ENCODE measurements at regions of chr1 and their contacts with region 1.

Region 1: DNA sequence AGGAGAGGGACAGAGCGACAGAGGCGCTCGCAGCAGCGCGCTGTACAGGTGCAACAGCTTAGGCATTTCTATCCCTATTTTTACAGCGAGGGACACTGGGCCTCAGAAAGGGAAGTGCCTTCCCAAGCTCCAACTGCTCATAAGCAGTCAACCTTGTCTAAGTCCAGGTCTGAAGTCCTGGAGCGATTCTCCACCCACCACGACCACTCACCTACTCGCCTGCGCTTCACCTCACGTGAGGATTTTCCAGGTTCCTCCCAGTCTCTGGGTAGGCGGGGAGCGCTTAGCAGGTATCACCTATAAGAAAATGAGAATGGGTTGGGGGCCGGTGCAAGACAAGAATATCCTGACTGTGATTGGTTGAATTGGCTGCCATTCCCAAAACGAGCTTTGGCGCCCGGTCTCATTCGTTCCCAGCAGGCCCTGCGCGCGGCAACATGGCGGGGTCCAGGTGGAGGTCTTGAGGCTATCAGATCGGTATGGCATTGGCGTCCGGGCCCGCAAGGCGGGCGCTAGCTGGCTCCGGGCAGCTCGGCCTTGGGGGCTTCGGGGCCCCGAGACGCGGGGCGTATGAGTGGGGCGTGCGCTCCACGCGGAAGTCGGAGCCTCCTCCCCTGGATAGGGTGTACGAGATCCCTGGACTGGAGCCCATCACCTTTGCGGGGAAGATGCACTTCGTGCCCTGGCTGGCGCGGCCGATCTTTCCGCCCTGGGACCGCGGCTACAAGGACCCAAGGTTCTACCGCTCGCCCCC is at the starts of genes CYB5RL and MRPL37:
- DNase-seq: peak; percentile 98
- H3K4me3 ChIP-seq: peak within 1 kb of the TSS; percentile 80
- H3K27ac ChIP-seq: peak within 1 kb of the TSS; percentile 24
- H3K4me1 ChIP-seq: peaks cover 6% of the 10 kb centered on the region
- H3K27me3 ChIP-seq: no peaks in the 10 kb centered on the region
- CTCF ChIP-seq: no peak
- total RNA-seq, gene CYB5RL: 3.6 to 12.1 TPM
- total RNA-seq, gene MRPL37: 76.7 to 157 TPM

Region 2: DNA sequence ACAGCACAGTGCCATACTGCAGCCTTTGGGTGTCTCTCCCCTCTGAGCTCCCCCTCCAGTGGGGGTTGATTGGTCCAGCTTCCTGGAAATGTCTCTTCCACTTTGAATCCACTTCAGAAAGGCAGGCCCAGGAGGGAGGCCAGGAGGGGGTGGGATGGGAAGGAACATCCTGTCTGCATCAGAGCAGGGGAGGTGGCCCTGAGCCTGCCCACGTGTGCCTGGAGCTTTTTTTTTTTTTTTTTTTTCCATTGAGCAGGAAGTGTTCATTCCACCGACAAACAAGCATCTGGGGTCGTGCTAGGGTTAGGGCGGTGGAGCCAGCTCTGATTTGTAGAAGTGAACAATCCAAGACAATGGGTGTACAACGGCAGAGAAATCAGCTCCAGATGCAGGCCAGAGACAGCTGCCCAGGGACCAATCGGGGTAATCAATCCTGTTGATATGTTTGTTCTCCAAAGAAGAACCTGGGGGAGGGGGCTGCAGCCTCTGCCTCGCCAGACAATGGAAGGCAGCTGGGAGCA is 112.9 kb after region 1 on chr1:
- intact Hi-C with region 1: no loop called
- DNase-seq: no peak
- H3K4me3 ChIP-seq: no peak overlapping the region
- H3K27ac ChIP-seq: no peak overlapping the region
- H3K4me1 ChIP-seq: peaks cover 5% of the 10 kb centered on the region
- H3K27me3 ChIP-seq: no peaks in the 10 kb centered on the region
- CTCF ChIP-seq: no peak

Region 3: GRCh38 chr1:54397090-54397591 is 197.2 kb after region 1 on chr1:
- intact Hi-C with region 1: loop called (anchors 10 kb)
- DNase-seq: no peak
- H3K4me3 ChIP-seq: no peak overlapping the region
- H3K27ac ChIP-seq: no peak overlapping the region
- H3K4me1 ChIP-seq: no peaks in the 10 kb centered on the region
- H3K27me3 ChIP-seq: no peaks in the 10 kb centered on the region
- CTCF ChIP-seq: no peak

Measured in colonic mucosa (tissue), 4 donors.